ENCODE measurements at regions of chr1 and their contacts with region 1.

Region 1: DNA sequence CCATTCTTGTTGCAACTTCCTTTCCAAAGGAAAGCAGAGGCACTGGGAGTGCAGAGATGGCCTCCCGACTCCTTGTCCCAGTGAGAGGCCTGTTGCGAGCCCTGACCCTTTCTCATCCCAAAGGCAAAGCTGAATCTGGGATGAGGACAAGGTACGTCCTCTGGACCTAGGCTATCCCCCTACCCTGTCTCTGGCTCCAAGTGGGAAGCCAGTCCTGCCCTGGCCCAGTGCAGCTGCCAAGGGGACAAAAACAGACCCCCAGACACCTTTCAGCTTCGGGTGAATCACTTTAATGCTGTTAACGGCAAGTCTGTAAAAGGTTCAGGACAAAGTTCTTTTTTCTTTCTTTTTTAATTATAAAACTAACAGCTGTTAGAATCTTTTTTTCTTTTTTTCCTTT is 2.5 kb downstream of the TSSK3 start:
- DNase-seq: no peak
- ATAC-seq: no peak

Region 2: DNA sequence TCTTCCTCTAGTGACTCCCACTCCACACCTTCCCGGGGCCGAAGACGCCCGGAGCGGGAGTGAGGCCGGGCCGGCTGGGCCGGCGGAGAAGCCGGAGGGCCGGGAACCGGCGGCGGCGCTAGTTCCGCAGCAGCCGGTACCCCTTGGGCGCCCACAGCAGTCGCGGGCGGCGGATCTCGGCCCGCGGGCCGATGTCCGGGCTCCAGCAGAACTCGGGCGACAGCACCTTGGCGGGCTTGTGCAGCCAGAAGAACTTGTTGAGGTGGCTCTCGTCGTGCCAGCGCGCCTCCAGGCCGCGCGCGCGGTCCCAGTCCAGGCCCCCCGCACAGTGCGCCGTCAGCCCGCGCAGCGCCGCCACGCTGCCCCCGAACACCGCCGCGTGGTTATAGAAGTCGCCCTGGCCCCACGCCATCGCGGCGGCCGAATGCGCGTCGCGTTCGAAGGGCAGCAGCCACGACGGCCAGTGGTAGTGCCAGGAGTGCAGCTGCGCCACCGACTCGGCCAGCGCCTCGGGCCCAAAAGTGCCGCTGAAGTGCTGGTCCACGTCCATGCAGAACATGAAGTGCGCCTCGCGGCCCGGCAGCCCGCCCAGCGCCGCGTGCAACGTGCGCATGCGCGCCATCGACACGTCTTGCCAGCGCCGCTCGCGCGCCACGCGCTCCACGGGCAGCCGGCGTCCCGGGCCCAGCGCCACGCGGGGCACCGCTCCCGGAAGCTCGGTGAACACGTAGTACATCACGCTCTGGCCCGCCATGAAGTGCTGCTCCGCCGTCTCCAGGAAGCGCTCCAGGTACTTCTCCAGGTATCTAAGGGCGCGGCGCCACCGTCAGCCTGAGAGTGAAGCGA is 942.0 kb after region 1 on chr1:
- intact Hi-C with region 1: loop called (anchors 5 kb)
- DNase-seq: no peak
- ATAC-seq: peak; percentile 58